Dendritic cell treated with granulocyte-macrophage colony-stimulating factor and Interleukin-4, amounts not matched to agents 40 ng/mL and 50 ng/mL, for 4 days (primary cell): ENCODE measurements at regions of chr1 and their contacts with region 1.

Region 1: DNA sequence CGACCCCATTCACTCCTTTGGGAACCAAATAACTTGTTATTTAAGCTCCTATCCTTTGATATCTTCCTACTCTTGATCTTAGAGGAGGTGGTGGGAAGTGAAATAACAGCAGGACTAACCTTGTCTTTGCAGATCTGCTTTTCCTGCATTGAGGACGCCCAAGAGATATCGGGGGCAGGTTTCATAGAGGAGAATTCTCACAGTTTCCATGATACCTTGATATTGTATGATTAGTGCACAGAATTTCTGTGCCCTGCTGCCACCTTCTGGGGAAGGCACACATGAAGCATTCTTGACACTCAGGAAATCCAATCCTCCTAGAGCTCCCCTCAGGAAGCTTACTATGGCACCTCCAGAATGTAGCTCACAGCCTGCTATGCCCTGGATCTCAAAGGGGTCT is 1.6 kb downstream of the CD1B start:
- H3K4me3 Mint-ChIP-seq: no peak overlapping the region
- H3K27ac Mint-ChIP-seq: no peak overlapping the region
- H3K4me1 Mint-ChIP-seq: peaks cover 22% of the 10 kb centered on the region
- H3K27me3 Mint-ChIP-seq: no peaks in the 10 kb centered on the region

Region 2: DNA sequence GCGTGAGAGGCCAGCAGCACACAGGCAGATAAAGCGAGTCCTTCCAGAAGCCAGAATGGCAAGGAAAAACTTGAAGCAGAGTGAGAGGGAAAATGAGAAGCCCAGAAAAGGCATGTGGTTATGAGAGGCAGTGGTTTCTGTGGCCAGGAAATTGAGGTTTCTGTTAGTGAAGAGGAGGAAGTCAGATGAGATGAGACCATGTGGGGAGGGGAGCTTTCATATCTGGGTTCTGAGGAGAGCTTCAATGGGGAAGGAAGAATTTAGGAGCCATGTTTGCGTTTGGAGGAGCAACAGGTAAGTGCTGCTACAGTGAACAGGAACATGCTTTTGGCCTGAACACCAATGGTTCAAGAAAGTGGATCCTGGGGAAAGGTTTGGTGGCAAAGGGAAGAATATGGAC is 81.6 kb before region 1 on chr1:
- intact Hi-C with region 1: loop called (anchors 5 kb)
- H3K4me3 Mint-ChIP-seq: peak overlapping the region; percentile 4
- H3K27ac Mint-ChIP-seq: peak overlapping the region; percentile 88
- H3K4me1 Mint-ChIP-seq: peaks cover 69% of the 10 kb centered on the region
- H3K27me3 Mint-ChIP-seq: peaks cover 11% of the 10 kb centered on the region

Region 3: DNA sequence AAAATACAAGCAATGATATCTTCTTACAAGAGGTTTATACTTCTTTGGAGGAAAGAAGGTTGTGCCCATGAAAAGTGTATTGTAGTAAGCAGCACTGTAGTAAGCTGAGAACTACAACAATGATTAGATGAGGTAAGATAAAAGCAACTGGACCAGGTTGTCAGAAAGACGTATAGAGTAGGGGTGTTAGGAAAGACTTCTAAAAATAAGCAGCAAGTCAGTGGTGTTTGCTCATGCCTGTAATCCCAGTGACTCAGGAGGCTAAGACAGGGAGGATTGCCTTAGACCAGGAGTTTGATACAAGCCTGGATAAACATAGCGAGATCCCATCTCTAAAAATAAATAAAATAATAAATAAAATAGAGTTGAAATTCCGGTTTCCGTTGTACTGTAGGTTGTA is 254.2 kb after region 1 on chr1:
- intact Hi-C with region 1: no loop called
- H3K4me3 Mint-ChIP-seq: no peak overlapping the region
- H3K27ac Mint-ChIP-seq: no peak overlapping the region
- H3K4me1 Mint-ChIP-seq: no peaks in the 10 kb centered on the region
- H3K27me3 Mint-ChIP-seq: no peaks in the 10 kb centered on the region